Activated CD4-positive, alpha-beta memory T cell treated with anti-CD3 and anti-CD28 coated beads for 36 hours (primary cell): ENCODE measurements at regions of chr1 and their contacts with region 1.

Region 1: DNA sequence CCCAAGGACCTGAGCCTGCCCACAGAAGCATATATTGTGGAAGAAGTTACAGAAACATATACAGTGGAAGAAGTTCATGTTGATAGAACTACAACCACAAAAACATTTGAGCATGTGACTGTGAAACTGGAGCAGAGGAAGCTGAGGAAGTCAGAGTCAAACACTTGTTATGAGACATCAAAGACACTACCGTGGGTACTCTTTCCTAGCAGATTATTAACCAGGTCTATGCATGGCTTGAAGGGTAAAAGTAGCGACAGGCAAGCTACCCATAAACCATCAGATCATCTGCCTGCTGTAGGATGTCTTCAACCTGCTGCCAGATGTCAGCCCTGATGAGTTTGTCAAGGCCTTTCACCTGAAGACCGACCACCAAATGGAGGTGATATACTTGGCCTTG is 35.8 kb downstream of the IVNS1ABP start:
- DNase-seq: peak; percentile 20
- H3K4me3 Mint-ChIP-seq: peak overlapping the region; percentile 28
- H3K27ac Mint-ChIP-seq: peak overlapping the region; percentile 88
- H3K4me1 Mint-ChIP-seq: peaks cover 57% of the 10 kb centered on the region
- H3K27me3 Mint-ChIP-seq: no peaks in the 10 kb centered on the region

Region 2: GRCh38 chr1:185200889-185201288 is 80.4 kb before region 1 on chr1:
- CTCF ChIA-PET with region 1: no interaction called
- POLR2A ChIA-PET with region 1: no interaction called
- intact Hi-C with region 1: no loop called
- DNase-seq: no peak
- H3K4me3 Mint-ChIP-seq: no peak overlapping the region
- H3K27ac Mint-ChIP-seq: no peak overlapping the region
- H3K4me1 Mint-ChIP-seq: no peaks in the 10 kb centered on the region
- H3K27me3 Mint-ChIP-seq: no peaks in the 10 kb centered on the region

Region 3: DNA sequence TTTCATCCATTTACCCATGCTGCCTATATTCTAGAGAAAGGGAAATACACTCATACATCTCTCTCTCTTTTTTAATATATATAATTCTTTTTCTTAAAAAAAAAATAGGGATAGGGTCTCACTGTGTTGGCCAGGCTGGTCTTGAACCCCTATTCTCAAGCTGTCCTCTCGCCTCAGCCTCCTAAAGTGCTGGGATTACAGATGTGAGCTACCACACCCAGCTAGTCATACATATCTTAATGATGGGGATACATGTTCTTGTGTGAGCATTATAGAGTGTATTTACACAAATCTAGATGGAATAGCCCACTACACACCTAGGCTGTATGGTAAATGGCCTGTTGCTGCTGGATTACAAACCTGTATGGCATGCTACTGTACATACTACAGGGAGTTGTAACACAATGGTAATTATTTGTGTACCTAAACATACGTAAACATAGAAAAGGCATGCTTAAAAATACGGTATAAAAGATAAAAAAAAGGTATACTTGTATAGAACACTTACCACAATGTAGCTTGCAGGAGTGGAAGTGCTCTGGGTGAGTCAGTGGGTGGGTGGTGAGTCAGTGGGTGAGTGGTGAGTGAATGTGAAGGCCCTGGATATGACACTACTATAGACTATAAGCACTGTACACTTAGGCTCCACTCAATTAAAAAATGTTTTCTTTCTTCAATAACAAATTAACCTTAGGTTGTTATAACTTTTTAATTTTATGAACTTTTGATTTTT is 37.1 kb before region 1 on chr1:
- CTCF ChIA-PET with region 1: interaction called, 3 read pairs
- POLR2A ChIA-PET with region 1: interaction called, 3 read pairs
- intact Hi-C with region 1: loop called (anchors 5 kb)
- DNase-seq: peak; percentile 79
- H3K4me3 Mint-ChIP-seq: no peak overlapping the region
- H3K27ac Mint-ChIP-seq: no peak overlapping the region
- H3K4me1 Mint-ChIP-seq: peaks cover 27% of the 10 kb centered on the region
- H3K27me3 Mint-ChIP-seq: no peaks in the 10 kb centered on the region

Region 4: GRCh38 chr1:185260611-185261010 is 20.6 kb before region 1 on chr1:
- CTCF ChIA-PET with region 1: no interaction called
- POLR2A ChIA-PET with region 1: no interaction called
- intact Hi-C with region 1: loop called (anchors 2 kb)
- DNase-seq: no peak
- H3K4me3 Mint-ChIP-seq: no peak overlapping the region
- H3K27ac Mint-ChIP-seq: no peak overlapping the region
- H3K4me1 Mint-ChIP-seq: peaks cover 13% of the 10 kb centered on the region
- H3K27me3 Mint-ChIP-seq: no peaks in the 10 kb centered on the region

Region 5: GRCh38 chr1:186255266-186255665 is 974.0 kb after region 1 on chr1:
- CTCF ChIA-PET with region 1: no interaction called
- POLR2A ChIA-PET with region 1: no interaction called
- intact Hi-C with region 1: loop called (anchors 10 kb)
- DNase-seq: no peak
- H3K4me3 Mint-ChIP-seq: no peak overlapping the region
- H3K27ac Mint-ChIP-seq: no peak overlapping the region
- H3K4me1 Mint-ChIP-seq: no peaks in the 10 kb centered on the region
- H3K27me3 Mint-ChIP-seq: peaks cover 10% of the 10 kb centered on the region